ENCODE measurements at regions of chr4 and their contacts with region 1.

Region 1: DNA sequence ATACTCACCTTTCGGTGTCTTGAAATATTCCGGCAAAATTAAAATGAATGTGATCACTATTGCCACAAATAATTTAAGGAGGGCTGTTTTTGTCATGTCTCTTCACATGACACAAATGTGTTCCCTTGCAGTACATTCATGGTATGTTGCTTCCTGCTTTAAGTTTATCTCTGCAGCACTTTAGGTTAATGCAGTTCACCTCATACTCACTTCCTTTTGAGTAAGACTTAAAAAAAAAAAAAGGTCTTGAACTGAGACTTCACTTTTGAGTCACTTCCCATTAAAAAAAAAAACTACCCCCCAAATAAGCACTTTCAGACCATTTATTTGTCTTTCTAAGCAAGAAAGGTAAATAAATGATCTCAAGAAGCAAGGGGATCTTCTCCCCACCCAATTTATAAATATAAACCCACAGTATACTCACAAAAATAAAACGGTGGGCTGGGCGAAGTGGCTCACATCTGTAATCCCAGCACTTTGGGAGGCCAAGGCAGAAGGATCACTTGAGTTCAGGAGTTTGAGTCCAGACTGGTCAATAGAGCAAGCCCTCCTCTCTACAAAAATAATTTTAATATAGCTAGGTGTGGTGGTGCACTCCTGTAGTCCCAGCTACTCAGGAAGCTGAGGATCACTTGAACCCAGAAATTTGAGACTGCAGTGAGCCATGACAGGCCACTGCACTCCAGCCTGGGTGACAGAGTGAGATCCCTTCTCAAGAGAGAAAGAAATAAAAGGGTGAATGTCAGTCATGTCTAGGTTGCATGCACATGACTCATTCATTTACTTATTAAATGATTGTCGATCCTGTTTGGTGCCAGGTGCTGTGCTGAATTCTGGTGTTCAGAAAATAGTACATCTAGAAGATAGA is at the start of gene TMEM156:
- DNase-seq: no peak
- H3K4me3 Mint-ChIP-seq: peak within 1 kb of the TSS; percentile 86
- H3K27ac Mint-ChIP-seq: peak within 1 kb of the TSS; percentile 80
- H3K4me1 Mint-ChIP-seq: peaks cover 45% of the 10 kb centered on the region
- H3K27me3 Mint-ChIP-seq: no peaks in the 10 kb centered on the region
- total RNA-seq, gene TMEM156: 17.6 and 17.8 TPM in 2 replicates

Region 2: GRCh38 chr4:38894340-38894982 is 138.0 kb before region 1 on chr4:
- intact Hi-C with region 1: loop called (anchors 5 kb)
- DNase-seq: no peak
- H3K4me3 Mint-ChIP-seq: no peak overlapping the region
- H3K27ac Mint-ChIP-seq: no peak overlapping the region
- H3K4me1 Mint-ChIP-seq: peaks cover 18% of the 10 kb centered on the region
- H3K27me3 Mint-ChIP-seq: no peaks in the 10 kb centered on the region

Region 3: DNA sequence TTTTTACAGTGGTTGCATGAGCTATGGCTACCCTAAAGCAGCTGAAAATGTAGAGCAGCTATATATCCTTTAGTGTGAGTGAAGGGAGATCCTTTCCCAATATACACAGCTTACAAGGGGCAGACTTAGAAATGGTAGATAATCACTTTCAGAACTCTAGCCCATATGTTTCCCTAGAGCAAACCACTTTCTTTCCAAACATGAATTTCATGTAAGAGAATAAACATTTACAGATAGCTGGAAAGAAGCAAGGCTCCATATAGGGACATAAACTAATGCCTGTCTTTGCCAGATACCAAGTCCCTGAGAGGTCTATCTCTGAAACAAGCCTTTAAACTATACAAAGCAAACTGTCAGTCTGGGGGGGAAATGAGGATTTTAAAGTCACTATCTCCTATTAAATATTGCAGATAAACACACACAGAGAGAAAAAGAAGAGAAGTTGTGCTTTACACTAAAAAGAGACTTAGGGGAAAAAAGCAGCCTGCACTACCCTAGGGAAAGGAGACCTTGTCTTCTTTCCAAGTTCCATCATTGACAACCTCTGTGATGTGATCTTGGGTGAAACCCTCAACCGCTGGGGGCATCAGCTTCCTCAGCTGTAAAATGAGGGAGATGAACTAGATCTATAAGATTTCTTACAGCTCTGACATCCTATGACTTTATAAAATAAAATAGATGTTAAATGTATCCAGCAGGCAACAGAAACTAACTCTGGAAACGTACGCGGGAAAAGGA is 73.8 kb before region 1 on chr4:
- intact Hi-C with region 1: loop called (anchors 1 kb)
- DNase-seq: no peak
- H3K4me3 Mint-ChIP-seq: no peak overlapping the region
- H3K27ac Mint-ChIP-seq: peak overlapping the region; percentile 94
- H3K4me1 Mint-ChIP-seq: peaks cover 35% of the 10 kb centered on the region
- H3K27me3 Mint-ChIP-seq: no peaks in the 10 kb centered on the region

Region 4: DNA sequence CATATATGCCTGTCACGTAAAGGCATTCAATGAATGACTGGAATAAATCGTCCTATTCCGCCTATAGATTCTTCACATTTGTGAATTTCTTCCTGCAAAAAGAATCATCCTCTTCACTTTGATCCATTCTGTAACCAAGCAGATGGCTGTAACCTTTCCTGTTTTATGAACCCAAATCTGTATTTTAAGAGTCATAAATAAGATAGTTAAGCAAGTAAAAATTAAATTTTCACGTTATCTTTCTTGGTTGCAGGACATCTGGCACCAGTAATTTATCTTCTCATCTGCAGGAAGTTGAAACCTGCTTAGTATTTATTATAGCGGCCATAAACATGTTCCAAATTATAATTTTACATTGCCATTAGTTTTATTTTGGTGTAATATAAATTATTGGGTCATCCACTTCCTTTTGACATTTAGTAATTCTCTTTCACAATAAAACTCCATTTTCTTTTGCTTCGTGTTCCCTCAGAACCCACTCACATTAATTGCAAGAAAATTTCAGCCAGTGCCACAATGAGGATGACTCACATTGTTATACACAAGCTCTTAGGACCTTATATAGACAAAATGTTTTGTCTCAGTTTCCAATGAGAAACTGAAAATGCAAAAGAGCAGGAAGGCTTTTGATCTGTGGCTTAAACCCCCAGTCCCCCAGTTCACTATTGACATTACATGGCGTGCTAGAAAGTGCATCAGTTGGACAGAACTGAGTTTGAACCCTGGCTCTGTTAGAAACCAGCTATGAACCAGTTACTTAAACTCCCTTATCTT is 51.4 kb before region 1 on chr4:
- intact Hi-C with region 1: loop called (anchors 1 kb)
- DNase-seq: no peak
- H3K4me3 Mint-ChIP-seq: peak overlapping the region; percentile 31
- H3K27ac Mint-ChIP-seq: peak overlapping the region; percentile 81
- H3K4me1 Mint-ChIP-seq: peaks cover 53% of the 10 kb centered on the region
- H3K27me3 Mint-ChIP-seq: no peaks in the 10 kb centered on the region

Region 5: DNA sequence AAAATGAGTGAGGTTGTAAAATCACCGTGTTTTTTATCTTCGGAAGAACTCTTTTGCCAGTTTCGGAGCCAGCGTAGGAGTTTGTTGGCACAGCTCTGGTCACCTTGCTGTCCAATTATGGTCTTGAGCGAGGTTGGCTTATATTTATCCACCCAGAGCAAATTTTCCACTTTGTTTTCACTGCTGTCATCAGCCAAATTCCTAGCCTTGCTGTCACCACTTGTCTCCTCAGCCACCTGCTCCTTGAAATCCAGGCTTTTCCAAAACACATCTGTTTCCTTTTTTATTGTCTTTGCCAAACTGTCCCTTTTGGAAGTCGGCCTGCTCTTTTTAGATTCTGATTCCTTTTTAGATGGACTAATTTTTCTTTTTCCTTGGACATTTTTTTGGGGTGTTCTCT is 276.2 kb after region 1 on chr4:
- intact Hi-C with region 1: no loop called
- DNase-seq: no peak
- H3K4me3 Mint-ChIP-seq: no peak overlapping the region
- H3K27ac Mint-ChIP-seq: no peak overlapping the region
- H3K4me1 Mint-ChIP-seq: peaks cover 5% of the 10 kb centered on the region
- H3K27me3 Mint-ChIP-seq: no peaks in the 10 kb centered on the region

Region 6: GRCh38 chr4:40254608-40255392 is 1222.3 kb after region 1 on chr4:
- intact Hi-C with region 1: no loop called
- DNase-seq: no peak
- H3K4me3 Mint-ChIP-seq: peak overlapping the region; percentile 28
- H3K27ac Mint-ChIP-seq: peak overlapping the region; percentile 85
- H3K4me1 Mint-ChIP-seq: peaks cover 53% of the 10 kb centered on the region
- H3K27me3 Mint-ChIP-seq: no peaks in the 10 kb centered on the region

Measured in activated T-helper 2 cell treated with anti-CD3 and anti-CD28 coated beads, Interferon-gamma antibody, Interleukin-2, Interleukin-4, amounts not matched to agents 10 μg/mL and 5 μg/mL and 100 μg/mL, durations not matched to agents 14 hours and 24 hours and 36 hours (primary cell).